IMR-90 (cell line): ENCODE measurements at regions of chr1 and their contacts with region 1.

Region 1: DNA sequence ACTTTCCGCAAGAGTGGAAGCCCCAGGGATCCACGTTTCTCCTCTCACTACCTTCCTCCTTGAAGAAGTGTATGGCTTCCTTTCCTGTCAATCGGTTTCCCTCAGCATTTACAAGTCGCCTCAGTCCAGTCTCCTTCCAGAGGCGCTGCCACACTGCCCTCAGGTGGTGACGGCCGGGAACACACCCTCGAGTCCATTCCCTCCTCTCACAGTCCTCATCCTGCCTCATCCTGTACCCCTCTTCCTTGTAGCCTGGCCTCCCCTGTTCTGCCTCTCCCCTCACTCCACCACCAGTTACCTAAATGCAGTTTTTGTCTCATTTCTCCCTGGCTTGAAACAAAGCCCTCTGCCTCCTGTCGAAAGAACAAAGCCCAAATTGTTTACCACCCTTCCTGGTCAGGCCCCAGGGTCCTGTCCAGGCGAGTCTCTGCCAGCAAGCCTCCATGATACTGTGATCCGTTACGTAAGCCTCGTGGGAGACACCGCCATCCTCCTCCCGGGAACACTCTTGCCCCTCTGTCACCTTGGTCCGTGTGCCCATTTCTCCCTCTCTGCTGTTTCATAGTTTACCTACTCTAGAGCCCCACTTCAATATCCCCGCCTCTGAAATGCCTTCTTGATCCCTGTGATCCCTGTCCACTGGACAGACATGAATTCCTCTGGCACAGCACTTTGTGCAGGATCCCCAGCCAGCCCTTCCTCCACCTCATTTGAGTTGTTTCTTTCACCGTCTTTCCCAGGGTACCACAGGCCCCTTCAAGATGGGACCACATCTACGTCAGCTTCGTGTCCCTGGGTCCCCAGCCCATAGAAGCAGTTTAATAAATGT is 23.3 kb upstream of the LSM10 start:
- DNase-seq: peak; percentile 82
- ATAC-seq: peak; percentile 99
- H3K4me3 ChIP-seq: no peak overlapping the region
- H3K27ac ChIP-seq: no peak overlapping the region
- H3K4me1 ChIP-seq: peaks cover 5% of the 10 kb centered on the region
- H3K27me3 ChIP-seq: no peaks in the 10 kb centered on the region
- CTCF ChIP-seq: peak; percentile 94
- POLR2A ChIP-seq: peak; percentile 44; the same call in 1 of the 2 replicates
- RAD21 ChIP-seq: peak; percentile 99

Region 2: GRCh38 chr1:36149237-36149972 is 271.6 kb before region 1 on chr1 and contains the start of gene TRAPPC3:
- CTCF ChIA-PET with region 1: no interaction called
- POLR2A ChIA-PET with region 1: interaction called, 4 read pairs
- dilution Hi-C with region 1: no loop called
- in situ Hi-C with region 1: no loop called
- intact Hi-C with region 1: loop called (anchors 1 kb)
- DNase-seq: peak; percentile 100
- ATAC-seq: peak; percentile 90
- H3K4me3 ChIP-seq: peak within 1 kb of the TSS; percentile 67
- H3K27ac ChIP-seq: peak within 1 kb of the TSS; percentile 97
- H3K4me1 ChIP-seq: peaks cover 17% of the 10 kb centered on the region
- H3K27me3 ChIP-seq: no peaks in the 10 kb centered on the region
- CTCF ChIP-seq: peak; percentile 99
- POLR2A ChIP-seq: peak; percentile 80
- RAD21 ChIP-seq: peak; percentile 97
- total RNA-seq, gene TRAPPC3: 76.0 and 101 TPM in 2 replicates

Region 3: GRCh38 chr1:36323597-36324352 is 97.3 kb before region 1 on chr1 and contains the start of gene EVA1B:
- CTCF ChIA-PET with region 1: interaction called, 11 read pairs
- POLR2A ChIA-PET with region 1: no interaction called
- dilution Hi-C with region 1: no loop called
- in situ Hi-C with region 1: no loop called
- intact Hi-C with region 1: loop called (anchors 1 kb)
- DNase-seq: peak; percentile 82
- ATAC-seq: peak; percentile 63
- H3K4me3 ChIP-seq: peak within 1 kb of the TSS; percentile 78
- H3K27ac ChIP-seq: peak within 1 kb of the TSS; percentile 94
- H3K4me1 ChIP-seq: peaks cover 30% of the 10 kb centered on the region
- H3K27me3 ChIP-seq: no peaks in the 10 kb centered on the region
- CTCF ChIP-seq: no peak
- POLR2A ChIP-seq: no peak
- RAD21 ChIP-seq: no peak
- total RNA-seq, gene EVA1B: 49.8 and 63.3 TPM in 2 replicates

Region 4: DNA sequence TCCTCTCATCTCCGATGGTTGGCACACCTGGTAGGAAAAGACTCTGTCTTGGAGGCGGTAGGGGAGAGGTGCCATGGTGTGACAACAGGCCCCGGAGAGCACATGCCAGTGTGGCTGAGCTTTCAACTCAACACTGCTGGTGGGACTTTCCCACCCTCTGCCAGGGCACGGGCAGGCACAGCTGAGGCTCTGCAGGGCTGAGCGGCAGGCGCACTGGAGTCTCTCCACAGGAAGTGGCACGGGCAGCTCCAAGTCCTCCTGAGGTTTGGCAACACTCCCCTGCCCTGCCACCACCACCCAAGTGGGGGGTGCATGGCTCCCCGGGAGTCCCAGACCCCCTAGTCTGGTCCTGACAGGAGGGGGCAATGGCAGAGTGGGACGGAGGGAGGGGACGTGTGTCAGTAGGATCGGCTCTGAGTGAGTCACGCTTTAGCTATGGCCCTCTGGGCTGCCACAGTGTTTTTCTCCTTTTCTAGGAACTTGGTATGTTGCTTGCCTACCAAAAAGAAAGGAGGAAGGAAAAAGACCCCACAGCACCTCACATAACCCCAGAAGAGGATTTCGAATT is 70.3 kb before region 1 on chr1:
- CTCF ChIA-PET with region 1: interaction called, 4 read pairs
- POLR2A ChIA-PET with region 1: no interaction called
- dilution Hi-C with region 1: no loop called
- in situ Hi-C with region 1: no loop called
- intact Hi-C with region 1: loop called (anchors 2 kb)
- DNase-seq: peak; percentile 80
- ATAC-seq: peak; percentile 73
- H3K4me3 ChIP-seq: no peak overlapping the region
- H3K27ac ChIP-seq: peak overlapping the region; percentile 91
- H3K4me1 ChIP-seq: peaks cover 45% of the 10 kb centered on the region
- H3K27me3 ChIP-seq: no peaks in the 10 kb centered on the region
- CTCF ChIP-seq: no peak
- POLR2A ChIP-seq: no peak
- RAD21 ChIP-seq: no peak

Region 5: DNA sequence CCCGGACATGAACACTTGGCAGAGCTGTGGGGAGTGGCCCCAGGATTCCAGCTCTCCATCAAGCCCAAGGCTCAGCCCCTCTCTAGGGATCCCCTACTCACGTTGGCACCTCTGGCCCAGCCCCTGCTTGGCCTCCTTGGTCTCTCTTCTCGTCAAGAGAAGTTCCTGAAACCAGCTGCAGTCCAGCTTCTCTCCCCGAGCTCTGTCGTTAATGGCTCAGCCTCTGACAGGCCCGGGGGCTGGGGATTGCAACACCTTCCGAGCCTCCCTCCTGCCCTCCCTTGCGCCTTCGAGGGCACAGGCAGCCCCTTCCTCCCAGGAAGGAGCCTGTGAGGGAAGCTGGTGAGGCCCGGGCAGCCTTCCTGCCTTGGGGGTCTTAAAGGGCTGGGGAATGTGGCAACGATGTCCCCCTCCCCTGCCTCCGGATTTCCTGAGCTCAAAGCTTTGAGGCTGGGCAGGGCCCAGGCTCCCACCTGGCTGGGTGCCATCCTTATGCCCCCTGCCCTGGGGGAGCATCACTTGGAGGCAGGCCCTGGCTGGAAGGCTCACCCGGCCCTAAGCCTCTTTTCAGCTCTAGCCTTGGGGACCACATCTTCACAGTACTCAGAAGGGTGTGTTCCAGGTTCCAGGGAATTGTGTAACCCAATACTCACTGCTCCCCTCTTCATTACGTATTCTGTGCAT is 61.8 kb after region 1 on chr1 and contains the start of gene CSF3R:
- CTCF ChIA-PET with region 1: no interaction called
- POLR2A ChIA-PET with region 1: no interaction called
- dilution Hi-C with region 1: no loop called
- in situ Hi-C with region 1: no loop called
- intact Hi-C with region 1: no loop called
- DNase-seq: no peak
- ATAC-seq: peak; percentile 24; the same call in 1 of the 2 replicates
- H3K4me3 ChIP-seq: no peak within 1 kb of the TSS
- H3K27ac ChIP-seq: no peak within 1 kb of the TSS
- H3K4me1 ChIP-seq: no peaks in the 10 kb centered on the region
- H3K27me3 ChIP-seq: peaks cover 39% of the 10 kb centered on the region
- CTCF ChIP-seq: no peak
- POLR2A ChIP-seq: no peak
- RAD21 ChIP-seq: no peak
- total RNA-seq, gene CSF3R: not detected in 2 replicates